Posterior cingulate gyrus (tissue), 11 donors: ENCODE measurements at regions of chr5 and their contacts with region 1.

Region 1: DNA sequence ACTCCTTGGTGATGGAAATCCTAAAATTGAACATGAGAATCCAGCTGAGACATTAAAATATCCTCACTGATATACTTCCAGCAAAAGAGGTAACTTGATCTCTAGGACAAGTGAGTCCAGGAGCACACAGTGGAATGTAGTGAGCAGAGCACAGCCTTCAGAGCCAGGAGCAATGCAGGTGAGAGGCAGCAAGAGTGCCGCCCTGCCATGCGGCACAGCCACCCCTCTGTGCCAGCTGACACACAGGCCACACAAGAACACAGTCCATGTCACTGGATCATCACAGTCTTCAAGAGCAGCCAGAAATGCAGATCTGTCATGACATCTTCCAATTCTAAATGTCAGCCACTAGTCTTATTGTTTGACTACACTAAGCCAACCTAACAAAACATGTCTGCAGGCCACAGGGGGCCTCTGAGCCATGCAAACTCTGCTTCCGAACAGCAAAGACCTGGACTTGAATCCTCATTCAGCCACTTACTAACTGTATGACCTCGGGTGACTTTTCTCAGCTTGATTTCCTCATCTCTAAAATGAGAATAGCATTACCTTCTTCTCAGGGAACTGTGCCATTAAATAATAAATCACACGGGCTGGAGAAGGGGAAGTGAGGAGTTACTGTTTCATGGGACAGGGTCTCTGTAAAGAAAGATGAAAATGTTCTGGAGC is 47.0 kb downstream of the CCDC125 start:
- DNase-seq: no peak

Region 2: DNA sequence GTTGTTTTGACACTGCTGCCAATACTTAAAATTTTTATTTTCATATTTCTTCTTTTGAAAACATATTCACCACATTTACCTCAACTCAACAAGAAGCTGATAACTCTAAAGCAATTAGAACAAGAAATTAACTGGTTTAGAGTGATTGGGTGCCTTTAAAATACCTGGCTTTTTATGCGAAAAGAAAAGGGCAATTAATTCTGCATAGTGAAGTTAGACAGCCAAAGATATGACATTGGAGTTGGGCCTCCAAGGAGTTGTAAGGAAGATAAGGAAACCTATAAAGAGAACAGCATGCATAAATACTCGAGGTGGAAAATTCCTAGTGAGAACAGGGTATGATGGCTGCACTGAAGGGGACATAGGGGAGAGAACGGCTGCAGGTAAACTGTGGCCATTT is 74.1 kb after region 1 on chr5:
- intact Hi-C with region 1: loop called (anchors 10 kb)
- DNase-seq: no peak